GM12878 (cell line): ENCODE measurements at regions of chr4 and their contacts with region 1.

Region 1: DNA sequence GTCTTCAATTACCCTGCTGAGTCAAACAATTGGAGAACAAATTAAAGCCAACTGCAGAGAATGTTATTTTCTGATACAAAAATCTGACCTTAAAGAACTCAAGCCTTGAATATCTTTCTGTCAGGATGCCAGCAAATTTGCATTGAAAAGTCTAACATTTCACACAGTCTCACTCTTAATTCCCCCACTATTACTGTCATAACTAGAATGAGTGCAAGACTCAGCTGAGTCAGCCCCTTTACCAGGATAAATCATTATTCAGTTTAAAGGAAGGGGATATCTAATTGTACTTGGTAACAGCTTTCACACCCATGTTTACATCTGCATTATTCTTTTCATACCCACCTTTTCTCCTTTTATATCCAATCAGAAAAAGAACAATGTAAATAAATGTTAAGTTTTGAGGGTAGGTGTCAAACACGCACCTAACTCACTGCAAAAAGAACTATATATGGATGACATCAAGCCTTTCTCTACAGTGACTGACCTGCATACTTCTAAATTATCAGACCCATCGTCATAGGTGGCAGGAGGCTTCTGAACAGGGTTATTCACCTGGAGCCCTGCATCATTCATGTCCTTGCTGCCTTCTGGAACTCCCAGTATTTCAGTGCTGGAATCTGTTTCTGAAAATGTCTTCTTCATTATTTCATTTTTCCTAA is 117.4 kb downstream of the TMA16 start:
- DNase-seq: no peak
- ATAC-seq: peak; percentile 83
- H3K4me3 ChIP-seq: no peak overlapping the region
- H3K27ac ChIP-seq: peak overlapping the region; percentile 38
- H3K4me1 ChIP-seq: peaks cover 25% of the 10 kb centered on the region
- H3K27me3 ChIP-seq: no peaks in the 10 kb centered on the region
- CTCF ChIP-seq: no peak
- EP300 ChIP-seq: peak in 1 of 2 experiments; percentile 16; a peak in 1 of 4 replicates
- POLR2A ChIP-seq: no peak
- RAD21 ChIP-seq: no peak

Region 2: DNA sequence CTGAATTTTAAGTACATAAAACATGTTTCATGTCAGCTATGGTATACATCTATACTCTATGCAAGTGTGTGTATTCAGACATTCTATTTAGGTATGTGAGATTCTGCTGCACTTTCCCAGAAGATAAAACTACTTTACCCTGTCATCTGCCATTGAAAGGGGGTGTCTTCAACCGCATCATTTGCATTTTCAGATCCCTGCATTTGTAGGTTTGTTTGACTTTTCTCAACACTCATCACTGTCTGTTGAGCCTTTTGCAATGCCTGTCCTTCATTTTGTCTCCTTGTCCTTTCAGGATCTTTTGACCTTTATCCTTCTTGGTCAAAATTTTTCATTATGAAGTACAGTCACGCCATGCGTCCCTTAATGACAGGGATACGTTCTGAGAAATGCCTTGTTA is 13.9 kb before region 1 on chr4:
- CTCF ChIA-PET with region 1: interaction called, 8 read pairs
- POLR2A ChIA-PET with region 1: interaction called, 3 read pairs
- RAD21 ChIA-PET with region 1: interaction called, 12 read pairs
- SMC1A ChIA-PET with region 1: interaction called, 52 read pairs
- in situ Hi-C with region 1: no loop called
- intact Hi-C with region 1: no loop called
- DNase-seq: peak; percentile 60
- ATAC-seq: peak; percentile 81
- H3K4me3 ChIP-seq: 0 out of 2 replicates have a peak overlapping the region, but pooled peaks have one; percentile 7
- H3K27ac ChIP-seq: peak overlapping the region; percentile 71
- H3K4me1 ChIP-seq: peaks cover 13% of the 10 kb centered on the region
- H3K27me3 ChIP-seq: no peaks in the 10 kb centered on the region
- CTCF ChIP-seq: no peak
- EP300 ChIP-seq: no peak
- POLR2A ChIP-seq: no peak
- RAD21 ChIP-seq: no peak; the same call in 1 of the 2 replicates

Region 3: DNA sequence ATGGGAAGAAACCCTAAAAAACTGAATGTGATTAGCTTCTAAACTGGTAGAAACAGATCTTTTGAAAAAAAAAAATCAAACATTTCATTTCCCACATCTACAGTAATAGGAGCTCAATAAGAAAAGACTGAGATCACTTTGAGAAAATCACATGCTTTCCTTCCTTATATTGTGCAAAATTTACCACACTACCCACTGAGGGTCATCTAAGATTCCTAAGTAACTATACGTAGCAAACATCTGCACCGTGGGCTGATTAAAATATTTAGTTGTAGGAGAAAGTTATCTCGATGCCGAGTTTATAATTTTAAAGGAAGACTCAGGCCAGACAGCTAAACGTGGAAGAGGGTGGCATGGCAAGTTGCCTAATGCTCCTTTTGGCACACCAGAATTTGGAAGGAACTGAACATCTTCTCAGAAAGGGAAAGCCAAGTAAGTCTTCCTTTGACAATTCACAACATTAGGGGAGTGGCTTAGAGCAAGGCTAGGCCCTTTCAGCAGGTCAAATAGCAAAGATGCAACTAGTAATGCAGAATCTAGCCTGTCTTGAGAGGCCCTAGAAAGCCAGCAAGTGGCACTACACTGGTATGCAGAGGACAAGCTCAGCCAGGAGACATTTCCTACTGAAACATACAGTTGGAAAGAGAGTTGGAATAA is 10.6 kb after region 1 on chr4:
- CTCF ChIA-PET with region 1: no interaction called
- POLR2A ChIA-PET with region 1: no interaction called
- RAD21 ChIA-PET with region 1: no interaction called
- SMC1A ChIA-PET with region 1: interaction called, 14 read pairs
- in situ Hi-C with region 1: no loop called
- intact Hi-C with region 1: no loop called
- DNase-seq: no peak
- ATAC-seq: no peak
- H3K4me3 ChIP-seq: no peak overlapping the region
- H3K27ac ChIP-seq: no peak overlapping the region
- H3K4me1 ChIP-seq: no peaks in the 10 kb centered on the region
- H3K27me3 ChIP-seq: no peaks in the 10 kb centered on the region
- CTCF ChIP-seq: no peak
- EP300 ChIP-seq: no peak
- POLR2A ChIP-seq: no peak
- RAD21 ChIP-seq: no peak